H1 (cell line): ENCODE measurements at regions of chr16 and their contacts with region 1.

Region 1: DNA sequence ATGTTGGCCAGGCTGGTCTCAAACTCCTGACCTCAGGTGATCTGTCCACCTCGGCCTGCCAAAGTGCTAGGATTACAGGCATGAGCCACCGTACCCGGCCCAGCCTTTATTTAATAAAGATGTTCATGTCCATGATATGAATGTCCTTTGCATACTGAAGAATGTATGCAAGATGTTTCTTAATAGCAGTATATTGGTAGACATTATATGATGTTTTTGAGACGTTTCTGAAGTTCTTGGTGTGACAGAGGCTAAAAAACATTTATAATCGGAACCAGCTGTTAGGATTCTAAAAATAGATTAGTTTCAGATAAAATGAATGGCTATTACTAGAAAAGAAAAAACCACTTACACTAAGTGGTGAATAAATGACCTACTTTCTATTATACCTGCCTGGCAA is 11.8 kb downstream of the PDZD9 start:
- DNase-seq: no peak
- H3K4me3 ChIP-seq: no peak overlapping the region
- H3K27ac ChIP-seq: no peak overlapping the region
- H3K4me1 ChIP-seq: peaks cover 0 to 2% (median 0%) of the 10 kb centered on the region in 4 experiments; a peak in 1 of 7 replicates
- H3K27me3 ChIP-seq: no peaks in the 10 kb centered on the region
- CTCF ChIP-seq: no peak
- EP300 ChIP-seq: no peak
- POLR2A ChIP-seq: no peak
- RAD21 ChIP-seq: no peak

Region 2: DNA sequence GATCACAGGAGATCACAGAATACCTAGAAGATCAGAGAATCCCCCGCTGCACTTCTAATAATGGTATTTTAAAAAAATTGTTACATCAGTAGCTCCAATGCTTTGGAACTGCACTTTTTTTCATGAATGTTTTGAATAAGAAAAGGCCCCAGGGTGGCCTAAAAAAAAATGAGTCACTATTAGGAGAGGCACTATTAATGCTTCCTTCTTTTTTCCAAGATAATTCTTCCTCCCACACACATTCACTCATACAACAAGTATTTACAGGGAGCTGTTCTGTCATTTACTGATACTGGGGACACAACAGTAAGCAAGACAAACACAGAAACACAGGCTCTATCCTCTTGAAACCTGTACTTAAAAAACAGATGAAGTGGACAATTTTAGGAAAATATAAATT is 12.5 kb after region 1 on chr16:
- CTCF ChIA-PET with region 1: interaction called, 23 read pairs
- POLR2A ChIA-PET with region 1: interaction called, 4 read pairs
- DNase-seq: no peak
- H3K4me3 ChIP-seq: no peak overlapping the region
- H3K27ac ChIP-seq: no peak overlapping the region
- H3K4me1 ChIP-seq: no peaks in the 10 kb centered on the region
- H3K27me3 ChIP-seq: 0 out of 7 replicates have a peak, but pooled peaks cover 0 to 2% (median under 1%) of the 10 kb centered on the region in 4 experiments
- CTCF ChIP-seq: no peak
- EP300 ChIP-seq: no peak
- POLR2A ChIP-seq: no peak
- RAD21 ChIP-seq: no peak

Region 3: DNA sequence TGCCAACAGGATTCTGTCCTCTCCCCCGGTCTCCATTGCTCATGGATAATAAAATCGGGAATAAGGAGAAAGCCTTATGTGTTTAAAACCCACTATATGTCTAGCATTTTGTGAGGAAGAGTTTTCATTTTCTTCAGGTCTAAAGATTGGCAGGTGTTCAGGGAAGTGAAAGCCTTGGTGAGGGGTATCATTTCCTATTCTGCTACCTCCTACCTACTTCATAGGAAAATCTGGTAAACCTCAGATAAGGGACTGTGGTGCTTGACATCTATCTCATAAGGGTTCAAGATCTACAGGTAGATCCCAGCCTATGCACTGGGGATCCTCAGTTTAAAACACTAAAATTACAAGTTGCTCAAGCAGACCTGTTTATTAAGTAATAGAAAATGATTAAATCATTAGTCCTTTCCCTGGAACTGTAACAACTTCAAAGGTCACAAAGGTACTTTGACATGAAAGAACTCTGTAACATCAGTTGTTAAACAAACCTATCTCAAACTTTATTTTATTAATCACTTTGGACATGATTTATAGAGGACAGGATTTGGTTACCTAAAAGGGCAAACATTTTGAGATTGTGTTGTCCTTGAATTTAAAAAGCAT is 25.2 kb after region 1 on chr16:
- CTCF ChIA-PET with region 1: no interaction called
- POLR2A ChIA-PET with region 1: no interaction called
- DNase-seq: no peak
- H3K4me3 ChIP-seq: no peak overlapping the region
- H3K27ac ChIP-seq: no peak overlapping the region
- H3K4me1 ChIP-seq: no peaks in the 10 kb centered on the region
- H3K27me3 ChIP-seq: no peaks in the 10 kb centered on the region
- CTCF ChIP-seq: no peak
- EP300 ChIP-seq: no peak
- POLR2A ChIP-seq: no peak
- RAD21 ChIP-seq: no peak

Region 4: DNA sequence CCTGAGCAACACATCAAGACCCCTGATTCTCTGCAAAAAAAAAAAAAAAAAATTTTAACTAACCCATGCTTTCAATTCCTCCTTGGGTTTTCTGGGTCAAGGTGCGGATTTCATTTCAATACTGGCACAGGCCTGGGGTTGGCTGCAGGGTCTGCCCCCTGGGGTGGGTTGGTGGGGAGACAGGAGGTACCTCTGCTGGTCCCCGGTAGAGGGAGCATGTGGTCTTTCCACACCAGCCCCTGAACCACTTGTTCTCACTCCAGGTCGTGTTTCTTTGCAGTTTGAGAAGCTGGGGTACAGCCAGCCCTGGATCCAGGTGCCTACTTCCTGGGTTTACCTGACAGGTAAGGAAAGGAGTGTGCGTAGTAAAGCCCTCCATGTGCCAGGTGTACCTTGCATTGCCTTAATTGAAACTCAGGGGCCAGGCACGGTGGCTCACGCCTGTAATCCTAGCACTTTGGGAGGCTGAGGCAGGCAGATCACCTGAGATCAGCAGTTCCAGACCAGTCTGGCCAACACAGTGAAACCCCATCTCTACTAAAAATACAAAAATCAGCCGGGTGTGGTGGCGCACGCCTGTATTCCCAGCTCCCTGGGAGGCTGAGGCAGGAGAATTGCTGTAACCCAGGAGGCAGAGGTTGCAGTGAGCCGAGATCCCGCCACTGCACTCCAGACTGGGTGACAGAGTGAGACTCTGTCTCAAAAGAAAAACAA is 194.9 kb after region 1 on chr16:
- CTCF ChIA-PET with region 1: interaction called, 18 read pairs
- POLR2A ChIA-PET with region 1: no interaction called
- DNase-seq: peak in 1 of 2 experiments; percentile 77
- H3K4me3 ChIP-seq: no peak overlapping the region
- H3K27ac ChIP-seq: no peak overlapping the region
- H3K4me1 ChIP-seq: peaks cover 0 to 4% (median 2%) of the 10 kb centered on the region in 4 experiments; a peak in 3 of 7 replicates
- H3K27me3 ChIP-seq: peaks cover 0 to under 1% (median 0%) of the 10 kb centered on the region in 4 experiments; a peak in 2 of 7 replicates
- CTCF ChIP-seq: peak; percentile 54 to 69 (median 66)
- EP300 ChIP-seq: no peak
- POLR2A ChIP-seq: no peak
- RAD21 ChIP-seq: peak; percentile 28 to 44; a peak in 2 of 4 replicates